IMR-90 (cell line): ENCODE measurements at regions of chr15 and their contacts with region 1.

Region 1: DNA sequence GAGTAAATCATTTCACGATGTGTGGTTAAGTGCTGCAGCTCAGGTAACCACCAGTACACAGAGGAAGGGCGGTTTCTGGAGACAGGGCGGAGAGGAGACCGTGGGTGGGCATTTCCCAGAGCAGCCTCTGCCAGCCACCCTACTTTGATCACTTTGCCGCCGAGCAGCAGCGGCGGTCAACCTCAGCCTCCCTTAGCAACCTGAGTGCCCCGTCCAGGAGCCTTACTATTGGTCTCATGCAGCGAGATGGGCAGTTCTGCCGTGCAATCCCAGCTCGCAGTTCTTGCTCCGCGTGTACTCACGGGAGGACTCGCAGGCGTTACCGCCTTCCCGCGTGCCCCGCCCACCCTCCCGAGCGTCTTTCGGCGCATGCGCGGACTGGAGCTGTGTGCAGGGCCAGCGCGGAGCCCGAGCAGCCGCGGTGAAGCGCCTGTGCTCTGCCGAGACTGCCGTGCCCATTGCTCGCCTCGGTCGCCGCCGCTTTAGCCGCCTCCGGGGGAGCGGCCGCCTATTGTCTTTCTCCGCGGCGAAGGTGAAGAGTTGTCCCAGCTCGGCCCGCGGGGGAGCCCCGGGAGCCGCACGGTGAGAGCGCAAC is at the start of gene AKAP13:
- DNase-seq: peak; percentile 99
- ATAC-seq: peak; percentile 93
- H3K4me3 ChIP-seq: peak within 1 kb of the TSS; percentile 67
- H3K27ac ChIP-seq: peak within 1 kb of the TSS; percentile 78
- H3K4me1 ChIP-seq: peaks cover 3% of the 10 kb centered on the region
- H3K27me3 ChIP-seq: no peaks in the 10 kb centered on the region
- CTCF ChIP-seq: no peak
- POLR2A ChIP-seq: peak; percentile 73
- RAD21 ChIP-seq: peak; percentile 26
- total RNA-seq, gene AKAP13: 46.4 and 46.9 TPM in 2 replicates

Region 2: DNA sequence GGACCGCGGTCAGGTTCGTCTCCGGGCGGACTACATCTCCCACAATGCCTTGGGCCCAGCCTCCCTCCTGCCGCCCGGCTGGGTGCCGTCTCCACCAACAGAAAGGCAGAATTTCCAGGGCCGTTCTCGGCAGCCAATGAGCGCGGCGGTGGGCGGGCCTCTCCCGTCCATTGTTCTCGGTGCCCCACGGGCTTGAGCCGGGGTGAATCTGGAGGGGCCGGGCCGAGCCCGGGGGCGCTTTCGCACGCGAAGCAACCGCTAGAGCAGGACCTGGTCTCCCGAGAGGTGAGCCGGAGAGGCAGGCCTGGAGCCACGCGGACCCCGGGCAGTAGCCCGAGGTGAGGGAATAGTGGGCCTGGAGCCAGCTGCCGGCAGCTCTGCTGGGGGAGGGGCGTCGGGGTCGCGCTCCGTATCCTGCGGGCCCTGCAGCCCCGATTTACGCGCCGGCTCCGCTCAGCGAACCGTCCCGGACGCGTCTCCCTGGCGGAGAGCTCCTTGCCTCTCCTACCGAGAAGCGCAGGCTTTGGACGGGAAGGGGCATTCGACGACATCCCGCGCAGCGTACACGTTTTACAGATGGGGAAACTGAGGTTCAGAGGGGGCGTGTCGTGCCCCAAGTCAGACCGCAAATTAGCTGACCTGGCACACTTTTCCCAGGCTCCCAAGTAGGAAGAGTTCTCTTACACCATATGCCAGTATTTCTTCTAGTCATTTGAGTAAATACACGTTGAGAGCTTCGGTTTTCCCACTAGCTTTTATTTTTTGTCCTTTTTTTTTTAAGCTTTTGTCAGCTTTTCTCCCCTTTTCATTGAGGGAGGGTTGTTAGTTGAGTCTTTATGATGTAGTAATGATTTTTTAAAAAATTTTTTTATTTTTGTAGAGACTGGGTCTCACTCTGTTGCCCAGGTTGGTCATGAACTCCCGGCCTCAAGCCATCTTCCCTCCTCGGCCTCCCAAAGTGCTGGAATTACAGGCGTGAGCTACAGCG is 779.2 kb before region 1 on chr15 and contains the start of gene ZSCAN2:
- CTCF ChIA-PET with region 1: no interaction called
- POLR2A ChIA-PET with region 1: no interaction called
- dilution Hi-C with region 1: no loop called
- in situ Hi-C with region 1: no loop called
- intact Hi-C with region 1: no loop called
- DNase-seq: peak; percentile 91
- ATAC-seq: peak; percentile 98
- H3K4me3 ChIP-seq: peak within 1 kb of the TSS; percentile 65
- H3K27ac ChIP-seq: peak within 1 kb of the TSS; percentile 70
- H3K4me1 ChIP-seq: peaks cover 4% of the 10 kb centered on the region
- H3K27me3 ChIP-seq: no peaks in the 10 kb centered on the region
- CTCF ChIP-seq: no peak
- POLR2A ChIP-seq: no peak
- RAD21 ChIP-seq: no peak
- total RNA-seq, gene ZSCAN2: 15.0 and 18.3 TPM in 2 replicates

Region 3: GRCh38 chr15:85333231-85333846 is 47.0 kb before region 1 on chr15:
- CTCF ChIA-PET with region 1: no interaction called
- POLR2A ChIA-PET with region 1: no interaction called
- dilution Hi-C with region 1: no loop called
- in situ Hi-C with region 1: no loop called
- intact Hi-C with region 1: loop called (anchors 2 kb)
- DNase-seq: peak; percentile 96
- ATAC-seq: peak; percentile 91
- H3K4me3 ChIP-seq: no peak overlapping the region
- H3K27ac ChIP-seq: peak overlapping the region; percentile 73; the same call in 1 of the 2 replicates
- H3K4me1 ChIP-seq: peaks cover 13% of the 10 kb centered on the region
- H3K27me3 ChIP-seq: no peaks in the 10 kb centered on the region
- CTCF ChIP-seq: no peak
- POLR2A ChIP-seq: no peak
- RAD21 ChIP-seq: no peak

Region 4: DNA sequence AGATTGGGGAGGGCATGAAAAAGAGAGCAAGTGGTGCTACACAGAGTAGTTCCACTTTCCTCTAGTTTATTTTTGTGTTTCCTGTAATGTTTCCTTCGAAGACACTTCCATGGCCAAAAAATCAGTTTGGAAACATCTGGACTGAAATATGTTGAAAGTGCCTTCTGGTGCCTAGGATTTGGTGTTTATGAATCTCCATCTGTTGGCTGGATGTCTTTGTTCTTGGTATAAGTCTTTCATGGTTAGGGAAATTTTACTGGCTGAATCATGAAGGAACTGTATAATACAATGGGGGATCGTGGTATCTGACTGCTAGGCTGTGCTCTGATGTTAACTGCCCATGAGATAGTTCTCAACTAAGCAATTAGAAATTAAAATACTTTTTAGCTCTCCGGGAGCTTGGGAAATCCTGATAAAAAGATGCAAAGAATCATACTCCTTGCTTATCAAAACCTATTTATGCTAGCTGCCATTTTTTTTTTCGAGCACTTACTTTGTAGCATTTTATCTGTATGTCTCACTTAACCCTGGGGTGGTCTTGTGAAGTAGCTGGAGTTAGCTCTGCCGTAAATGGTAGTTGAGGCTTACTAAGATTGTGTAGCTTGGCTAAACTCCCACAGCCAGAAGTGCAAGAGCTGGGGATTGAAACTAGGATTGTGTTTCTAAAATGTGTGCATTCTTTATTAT is 22.0 kb after region 1 on chr15:
- CTCF ChIA-PET with region 1: interaction called, 4 read pairs
- POLR2A ChIA-PET with region 1: interaction called, 3 read pairs
- dilution Hi-C with region 1: no loop called
- in situ Hi-C with region 1: no loop called
- intact Hi-C with region 1: loop called (anchors 2 kb)
- DNase-seq: peak; percentile 92
- ATAC-seq: peak; percentile 52
- H3K4me3 ChIP-seq: 0 out of 2 replicates have a peak overlapping the region, but pooled peaks have one; percentile 13
- H3K27ac ChIP-seq: peak overlapping the region; percentile 10; the same call in 1 of the 2 replicates
- H3K4me1 ChIP-seq: peaks cover 25% of the 10 kb centered on the region
- H3K27me3 ChIP-seq: no peaks in the 10 kb centered on the region
- CTCF ChIP-seq: no peak
- POLR2A ChIP-seq: no peak
- RAD21 ChIP-seq: no peak